ENCODE measurements at regions of chr3 and their contacts with region 1.

Region 1: GRCh38 chr3:47440131-47440530 is 35.6 kb downstream of the SCAP start:
- DNase-seq: peak; percentile 30
- H3K4me3 Mint-ChIP-seq: no peak overlapping the region
- H3K27ac Mint-ChIP-seq: no peak overlapping the region
- H3K4me1 Mint-ChIP-seq: peaks cover 21% of the 10 kb centered on the region
- H3K27me3 Mint-ChIP-seq: no peaks in the 10 kb centered on the region
- CTCF ChIP-seq: no peak

Region 2: DNA sequence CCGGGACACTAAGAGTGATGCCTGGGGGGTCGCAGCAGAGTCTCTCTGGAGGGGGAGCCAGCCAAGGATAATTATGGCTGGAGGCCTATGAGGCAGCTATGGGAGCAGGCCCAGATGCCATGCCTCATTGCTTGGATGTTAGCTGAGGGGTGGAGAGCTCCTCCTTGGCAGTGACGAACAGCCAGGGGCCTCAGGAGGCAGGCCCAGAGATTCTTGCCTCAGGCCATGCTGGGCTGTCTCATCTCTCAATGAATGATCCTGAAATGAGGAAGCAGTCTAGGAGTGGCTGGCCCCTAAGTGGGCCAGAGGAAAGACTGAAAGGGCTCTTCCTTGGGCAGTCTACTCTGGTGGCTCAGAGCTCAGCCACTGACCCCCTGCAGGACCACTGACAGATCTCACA is 178.8 kb before region 1 on chr3:
- CTCF ChIA-PET with region 1: no interaction called
- POLR2A ChIA-PET with region 1: no interaction called
- intact Hi-C with region 1: no loop called
- DNase-seq: no peak
- H3K4me3 Mint-ChIP-seq: no peak overlapping the region
- H3K27ac Mint-ChIP-seq: no peak overlapping the region
- H3K4me1 Mint-ChIP-seq: no peaks in the 10 kb centered on the region
- H3K27me3 Mint-ChIP-seq: no peaks in the 10 kb centered on the region
- CTCF ChIP-seq: no peak

Region 3: GRCh38 chr3:47406762-47407149 is 33.4 kb before region 1 on chr3:
- CTCF ChIA-PET with region 1: no interaction called
- POLR2A ChIA-PET with region 1: no interaction called
- intact Hi-C with region 1: no loop called
- DNase-seq: no peak
- H3K4me3 Mint-ChIP-seq: no peak overlapping the region
- H3K27ac Mint-ChIP-seq: no peak overlapping the region
- H3K4me1 Mint-ChIP-seq: peaks cover 18% of the 10 kb centered on the region
- H3K27me3 Mint-ChIP-seq: no peaks in the 10 kb centered on the region
- CTCF ChIP-seq: no peak

Region 4: GRCh38 chr3:47455806-47456452 is 15.8 kb after region 1 on chr3:
- CTCF ChIA-PET with region 1: interaction called, 5 read pairs
- POLR2A ChIA-PET with region 1: interaction called, 51 read pairs
- intact Hi-C with region 1: no loop called
- DNase-seq: peak; percentile 72
- H3K4me3 Mint-ChIP-seq: no peak overlapping the region
- H3K27ac Mint-ChIP-seq: peak overlapping the region; percentile 90
- H3K4me1 Mint-ChIP-seq: peaks cover 14% of the 10 kb centered on the region
- H3K27me3 Mint-ChIP-seq: no peaks in the 10 kb centered on the region
- CTCF ChIP-seq: no peak

Region 5: GRCh38 chr3:47475570-47476329 is 35.6 kb after region 1 on chr3 and contains the start of gene SCAP:
- CTCF ChIA-PET with region 1: interaction called, 9 read pairs
- POLR2A ChIA-PET with region 1: interaction called, 61 read pairs
- intact Hi-C with region 1: loop called (anchors 5 kb)
- DNase-seq: peak; percentile 89
- H3K4me3 Mint-ChIP-seq: peak within 1 kb of the TSS; percentile 99
- H3K27ac Mint-ChIP-seq: peak within 1 kb of the TSS; percentile 86
- H3K4me1 Mint-ChIP-seq: peaks cover 23% of the 10 kb centered on the region
- H3K27me3 Mint-ChIP-seq: no peaks in the 10 kb centered on the region
- CTCF ChIP-seq: peak; percentile 87
- total RNA-seq, gene SCAP: 84.3 and 87.8 TPM in 2 replicates

Region 6: DNA sequence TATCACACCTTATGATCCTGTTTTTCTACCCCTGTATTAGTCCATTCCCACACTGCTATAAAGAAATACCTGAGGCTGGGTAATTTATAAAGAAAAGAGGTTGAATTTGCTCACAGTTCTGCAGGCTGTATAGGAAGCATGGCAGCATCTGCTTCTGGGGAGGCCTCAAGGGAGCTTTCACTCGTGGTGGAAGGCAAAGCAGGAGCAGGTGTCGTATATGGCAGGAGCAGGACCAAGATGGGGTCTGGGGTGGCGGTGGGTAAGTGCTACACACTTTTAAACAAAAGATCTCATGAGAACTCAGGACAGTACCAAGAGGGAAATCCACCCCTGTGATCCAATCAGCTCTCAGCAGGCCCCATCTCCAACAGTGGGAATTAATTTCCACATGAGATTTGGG is 51.1 kb after region 1 on chr3:
- CTCF ChIA-PET with region 1: no interaction called
- POLR2A ChIA-PET with region 1: no interaction called
- intact Hi-C with region 1: no loop called
- DNase-seq: no peak
- H3K4me3 Mint-ChIP-seq: no peak overlapping the region
- H3K27ac Mint-ChIP-seq: no peak overlapping the region
- H3K4me1 Mint-ChIP-seq: no peaks in the 10 kb centered on the region
- H3K27me3 Mint-ChIP-seq: no peaks in the 10 kb centered on the region
- CTCF ChIP-seq: no peak

Measured in MCF 10A (cell line).